Heart left ventricle (tissue), 16 donors: ENCODE measurements at regions of chr9 and their contacts with region 1.

Region 1: DNA sequence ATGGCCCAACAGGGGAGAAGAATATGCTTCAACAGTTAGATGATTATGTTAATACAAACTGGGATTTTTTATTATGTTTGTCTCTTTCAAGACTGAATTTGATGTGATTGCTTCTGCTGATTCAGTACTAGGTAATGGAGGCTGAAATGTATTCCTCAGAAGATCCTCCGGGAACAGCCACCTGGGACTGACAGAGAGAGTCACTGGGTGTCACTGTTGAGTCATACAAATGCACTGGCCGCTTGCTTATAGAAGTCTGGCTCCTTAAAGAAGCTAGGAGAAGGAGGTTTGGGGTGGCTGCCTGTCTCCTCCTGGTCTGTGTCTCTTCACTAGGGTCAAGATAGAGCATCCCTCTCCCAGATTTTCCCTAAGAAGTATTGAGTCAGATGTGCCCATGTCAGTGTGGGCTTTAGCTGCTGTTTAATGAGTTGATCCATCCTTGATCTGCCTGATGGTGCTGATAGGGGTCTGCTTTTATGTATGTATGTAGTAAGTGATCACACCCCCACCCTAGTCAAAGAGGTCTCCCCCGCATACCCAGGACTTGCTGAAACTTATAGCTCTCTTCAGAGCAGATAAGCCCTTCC is 773.4 kb downstream of the BRINP1 start:
- DNase-seq: peak in 1 of 5 donors; percentile 8
- ATAC-seq: peak in 3 of 4 donors; percentile 48 to 68 (median 64)
- H3K4me3 ChIP-seq: no peak overlapping the region
- H3K27ac ChIP-seq: no peak overlapping the region
- H3K4me1 ChIP-seq: no peaks in the 10 kb centered on the region
- H3K27me3 ChIP-seq: no peaks in the 10 kb centered on the region
- CTCF ChIP-seq: peak in 9 of 12 donors; percentile 5 to 46 (median 35)
- POLR2A ChIP-seq: no peak

Region 2: DNA sequence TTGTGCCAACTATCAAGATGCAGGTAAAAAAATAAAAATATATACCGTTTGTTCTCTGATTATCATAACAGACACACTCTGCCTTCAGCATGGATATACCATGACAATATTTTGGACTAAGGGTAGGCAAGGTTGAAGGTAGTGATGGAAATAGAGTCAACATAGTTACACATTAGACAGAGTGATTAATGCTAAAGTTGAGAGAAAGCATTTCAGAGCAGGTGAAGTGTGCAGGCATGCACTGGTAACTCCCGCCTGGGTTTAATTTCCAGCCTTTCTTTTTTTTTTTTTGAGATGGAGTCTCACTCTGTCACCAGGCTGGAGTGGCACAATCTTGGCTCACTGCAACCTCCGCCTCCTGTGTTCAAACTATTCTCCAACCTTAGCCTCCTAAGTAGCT is 433.1 kb before region 1 on chr9:
- intact Hi-C with region 1: loop called in 1 of 10 experiments (anchors 10 kb)
- DNase-seq: no peak
- ATAC-seq: no peak
- H3K4me3 ChIP-seq: no peak overlapping the region
- H3K27ac ChIP-seq: no peak overlapping the region
- H3K4me1 ChIP-seq: no peaks in the 10 kb centered on the region
- H3K27me3 ChIP-seq: peaks cover 0 to 34% (median 0%) of the 10 kb centered on the region in 9 donors
- CTCF ChIP-seq: no peak
- POLR2A ChIP-seq: no peak

Region 3: DNA sequence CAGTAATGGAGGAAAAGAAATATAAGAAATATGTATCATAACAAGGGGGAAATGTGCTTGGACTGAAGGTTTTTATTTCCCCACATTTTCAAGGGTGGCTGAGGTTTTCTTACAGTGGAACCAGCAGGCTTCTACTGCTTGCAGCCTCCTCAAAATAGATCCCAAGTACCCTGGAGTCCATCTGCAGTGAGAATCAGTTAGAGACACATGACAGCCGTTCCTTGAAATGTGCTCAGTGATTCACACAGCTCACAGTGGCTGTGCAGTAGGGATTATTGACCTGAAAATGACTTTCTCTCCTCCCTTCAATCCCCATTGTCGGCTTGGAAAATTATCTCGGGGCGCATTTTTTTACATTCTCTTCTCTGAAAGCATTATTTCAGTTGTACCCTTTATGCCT is 59.7 kb before region 1 on chr9:
- intact Hi-C with region 1: loop called in 1 of 10 experiments (anchors 5 kb)
- DNase-seq: no peak
- ATAC-seq: no peak
- H3K4me3 ChIP-seq: no peak overlapping the region
- H3K27ac ChIP-seq: no peak overlapping the region
- H3K4me1 ChIP-seq: no peaks in the 10 kb centered on the region
- H3K27me3 ChIP-seq: no peaks in the 10 kb centered on the region
- CTCF ChIP-seq: no peak
- POLR2A ChIP-seq: no peak